BJ (cell line): ENCODE measurements at regions of chr4 and their contacts with region 1.

Region 1: GRCh38 chr4:55948726-55949474 is at the start of gene CEP135:
- DNase-seq: peak; percentile 51
- H3K4me3 ChIP-seq: peak within 1 kb of the TSS; percentile 75
- H3K27me3 ChIP-seq: no peaks in the 10 kb centered on the region
- CTCF ChIP-seq: peak; percentile 82
- polyA plus RNA-seq, gene CEP135: 2.0 and 3.6 TPM in 2 replicates

Region 2: GRCh38 chr4:55931833-55932232 is 17.1 kb before region 1 on chr4:
- CTCF ChIA-PET with region 1: interaction called, 32 read pairs
- POLR2A ChIA-PET with region 1: interaction called, 3 read pairs
- DNase-seq: no peak
- H3K4me3 ChIP-seq: no peak overlapping the region
- H3K27me3 ChIP-seq: no peaks in the 10 kb centered on the region
- CTCF ChIP-seq: no peak

Region 3: GRCh38 chr4:55973650-55974049 is 24.8 kb after region 1 on chr4:
- CTCF ChIA-PET with region 1: interaction called, 12 read pairs
- POLR2A ChIA-PET with region 1: no interaction called
- DNase-seq: no peak
- H3K4me3 ChIP-seq: no peak overlapping the region
- H3K27me3 ChIP-seq: no peaks in the 10 kb centered on the region
- CTCF ChIP-seq: no peak

Region 4: DNA sequence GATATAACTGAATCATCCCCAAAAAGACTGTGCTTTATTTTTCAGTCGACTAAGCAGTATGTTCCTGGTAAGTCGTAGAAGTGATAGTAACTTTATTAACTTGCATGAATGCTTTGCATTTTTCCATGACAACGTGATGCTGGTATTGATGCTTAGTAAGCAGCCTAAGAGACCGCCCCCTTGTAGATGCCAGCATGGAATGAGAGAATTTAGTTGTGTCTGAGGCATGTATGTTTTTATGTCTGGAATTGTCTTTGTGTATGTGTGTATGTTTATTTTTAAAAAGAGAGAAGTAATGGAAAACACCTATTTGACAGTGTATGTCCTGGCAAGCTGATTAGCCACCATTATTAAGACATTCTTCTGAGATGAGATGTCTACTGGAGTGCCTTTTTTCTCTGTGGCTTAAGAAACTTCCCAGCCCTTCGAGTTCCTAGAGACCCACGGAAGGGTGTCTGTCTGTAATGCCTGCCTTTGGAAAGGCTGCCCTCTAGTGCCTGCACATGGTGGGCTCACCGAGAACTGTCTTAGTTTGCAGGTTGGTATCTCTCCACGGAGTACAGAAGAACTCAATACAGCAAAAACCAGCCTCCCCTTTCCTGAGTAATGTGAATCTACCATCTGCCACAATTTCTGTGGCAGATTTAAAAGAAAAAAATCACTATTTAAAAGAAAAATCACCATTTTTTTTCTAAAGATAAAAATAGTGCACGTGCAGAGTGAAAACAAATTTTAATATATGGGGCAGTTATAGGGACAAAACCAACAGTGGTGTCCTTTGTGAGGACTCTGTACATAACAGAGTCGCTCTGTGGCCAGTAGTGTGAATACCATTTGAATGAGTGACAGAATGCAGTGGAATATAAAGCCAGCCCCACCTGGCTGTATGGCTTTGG is 352.5 kb after region 1 on chr4:
- CTCF ChIA-PET with region 1: interaction called, 13 read pairs
- POLR2A ChIA-PET with region 1: no interaction called
- DNase-seq: peak; percentile 35
- H3K4me3 ChIP-seq: no peak overlapping the region
- H3K27me3 ChIP-seq: no peaks in the 10 kb centered on the region
- CTCF ChIP-seq: peak; percentile 91

Region 5: DNA sequence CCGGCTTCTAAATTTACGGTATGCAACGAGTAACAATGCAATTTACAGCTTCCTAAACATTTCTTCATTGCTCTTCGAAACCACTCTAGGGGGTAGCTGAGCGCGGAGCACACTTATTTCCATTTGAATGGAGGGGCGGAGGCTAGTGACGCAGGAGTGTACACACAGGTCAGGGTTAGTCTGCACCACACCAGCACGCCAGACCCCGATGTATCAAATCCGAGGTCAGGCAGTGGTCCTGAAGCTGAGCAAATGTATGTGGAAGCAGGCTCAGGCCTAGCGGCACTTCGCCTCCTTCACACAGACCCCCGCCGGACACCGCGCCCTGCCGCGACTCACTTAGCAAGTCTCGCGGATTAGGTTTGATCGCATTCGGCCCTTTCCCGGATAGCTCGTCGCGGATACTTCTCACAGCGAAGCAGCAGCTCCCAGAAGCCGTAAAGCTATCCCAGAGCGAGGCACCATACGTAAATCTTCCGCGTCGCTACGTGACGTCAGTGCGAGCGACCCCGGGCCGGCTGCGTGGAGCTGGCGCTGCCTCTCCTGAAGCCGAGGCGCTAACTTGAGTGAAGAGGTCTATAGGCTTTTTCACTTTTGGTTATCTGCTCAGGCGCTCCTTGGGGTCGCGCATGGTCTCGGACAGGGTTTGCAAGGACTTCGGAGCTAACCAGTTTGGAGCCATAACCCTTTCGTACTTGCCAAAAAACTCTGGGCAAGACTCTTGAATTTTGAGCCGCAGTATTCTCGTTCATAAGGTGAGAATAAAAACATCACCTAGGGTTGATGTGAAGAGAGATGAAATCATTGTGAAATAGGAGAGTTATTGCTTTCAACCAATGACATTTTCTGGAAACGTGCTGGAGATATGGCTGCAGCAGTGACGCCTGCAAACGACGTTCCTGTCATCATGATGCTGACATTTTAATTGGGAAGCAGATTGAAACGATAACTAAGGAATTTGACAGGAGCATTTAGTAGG is 438.4 kb after region 1 on chr4 and contains the start of gene AASDH:
- CTCF ChIA-PET with region 1: no interaction called
- POLR2A ChIA-PET with region 1: interaction called, 11 read pairs
- DNase-seq: peak; percentile 73
- H3K4me3 ChIP-seq: peak within 1 kb of the TSS; percentile 74
- H3K27me3 ChIP-seq: no peaks in the 10 kb centered on the region
- CTCF ChIP-seq: no peak
- polyA plus RNA-seq, gene AASDH: 3.4 and 8.8 TPM in 2 replicates